CD8-positive, alpha-beta T cell (primary cell): ENCODE measurements at regions of chr15 and their contacts with region 1.

Region 1: DNA sequence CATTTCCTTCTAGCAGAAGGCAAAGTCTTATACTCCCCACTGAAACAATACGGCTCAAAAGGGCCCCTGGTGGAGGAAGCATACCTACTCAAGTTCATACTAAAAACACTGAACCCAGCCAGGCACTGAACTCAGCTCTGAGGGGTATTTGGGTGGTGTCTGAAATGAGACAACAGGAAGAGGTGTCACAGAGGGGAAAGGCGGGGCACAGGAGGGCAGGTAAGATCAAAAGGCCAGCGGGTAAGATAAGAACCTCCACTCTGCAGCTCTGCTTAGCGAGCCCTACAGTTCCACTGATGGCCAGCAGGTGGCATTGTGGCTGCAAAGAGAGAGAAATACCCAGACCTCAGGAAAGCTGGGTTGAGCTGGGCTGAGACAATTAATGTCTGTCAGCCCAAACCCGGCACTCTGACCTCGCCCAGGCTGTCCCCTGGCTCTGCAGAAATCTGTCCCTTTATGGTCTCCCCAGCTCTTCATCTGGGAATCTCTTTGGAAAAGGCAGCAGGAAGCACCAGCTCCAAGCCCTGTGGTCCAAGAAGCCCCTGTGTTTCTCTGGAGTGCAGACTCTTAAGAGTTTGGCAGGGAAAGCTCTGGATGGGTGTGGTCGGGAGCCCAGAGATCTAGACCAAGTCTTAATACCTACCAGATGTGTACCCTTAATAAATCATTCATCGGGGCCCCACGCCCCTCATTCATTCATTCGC is 8.4 kb downstream of the MFGE8 start:
- DNase-seq: peak; percentile 90 to 97 (median 95)
- ATAC-seq: peak; percentile 98
- H3K4me3 ChIP-seq: no peak overlapping the region
- H3K4me3 Mint-ChIP-seq: peak overlapping the region; percentile 61
- H3K27ac ChIP-seq: peak overlapping the region; percentile 36 to 66
- H3K27ac Mint-ChIP-seq: peak overlapping the region; percentile 91
- H3K4me1 ChIP-seq: peaks cover 31% of the 10 kb centered on the region
- H3K4me1 Mint-ChIP-seq: peaks cover 41% of the 10 kb centered on the region
- H3K27me3 ChIP-seq: no peaks in the 10 kb centered on the region
- H3K27me3 Mint-ChIP-seq: no peaks in the 10 kb centered on the region
- CTCF ChIP-seq: peak; percentile 87

Region 2: DNA sequence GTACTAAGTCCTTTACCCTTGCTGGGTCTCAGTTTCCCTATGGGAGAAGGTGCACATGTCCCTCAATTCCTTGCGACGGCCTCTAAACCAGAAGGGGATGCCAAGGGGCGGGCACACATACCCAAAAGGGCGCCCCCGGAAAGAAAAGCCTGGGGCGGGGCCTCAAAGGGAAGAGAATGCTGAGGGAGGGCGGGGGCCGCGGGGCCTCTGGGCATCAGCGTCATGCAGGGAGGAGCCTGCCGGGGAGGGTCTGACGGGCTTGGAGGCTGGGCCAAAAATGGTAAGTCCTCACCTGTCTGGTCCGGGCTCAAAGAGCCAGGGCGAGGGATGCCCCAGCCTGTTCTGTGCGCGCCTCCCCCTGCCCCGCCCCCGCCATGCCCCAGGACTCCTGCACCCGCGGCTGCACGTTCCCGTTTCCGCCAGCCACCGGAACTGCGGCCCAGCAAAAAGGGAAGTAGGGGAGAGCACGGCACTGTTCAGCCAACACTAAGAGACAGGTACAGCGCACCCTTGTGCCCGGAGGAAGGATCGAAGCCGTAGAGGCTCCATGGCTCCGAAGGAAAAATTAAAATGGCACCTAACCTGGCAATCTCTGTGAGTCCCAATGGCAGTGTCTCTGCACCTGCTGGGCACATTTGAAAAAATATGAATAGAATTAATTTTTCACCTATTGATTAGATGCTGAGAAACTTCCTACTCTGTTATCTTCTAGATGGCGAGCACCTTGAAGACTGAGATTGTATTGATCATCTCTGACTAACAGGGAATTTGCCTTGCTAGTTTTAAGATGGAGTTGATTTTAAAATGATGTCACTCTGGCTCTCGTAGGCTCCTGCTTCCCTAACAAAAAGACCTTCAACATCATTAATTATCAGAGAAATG is 358.3 kb before region 1 on chr15 and contains the start of gene DET1:
- CTCF ChIA-PET with region 1: no interaction called
- POLR2A ChIA-PET with region 1: no interaction called
- intact Hi-C with region 1: loop called (anchors 1 to 10 kb)
- DNase-seq: peak; percentile 87 to 98 (median 94)
- ATAC-seq: peak; percentile 91
- H3K4me3 ChIP-seq: peak within 1 kb of the TSS; percentile 60 to 62
- H3K4me3 Mint-ChIP-seq: peak within 1 kb of the TSS; percentile 91
- H3K27ac ChIP-seq: peak within 1 kb of the TSS; percentile 72 to 80
- H3K27ac Mint-ChIP-seq: peak within 1 kb of the TSS; percentile 96
- H3K4me1 ChIP-seq: peaks cover 6% of the 10 kb centered on the region
- H3K4me1 Mint-ChIP-seq: peaks cover 18% of the 10 kb centered on the region
- H3K27me3 ChIP-seq: no peaks in the 10 kb centered on the region
- H3K27me3 Mint-ChIP-seq: no peaks in the 10 kb centered on the region
- CTCF ChIP-seq: peak; percentile 70
- total RNA-seq, gene DET1: 1.4 to 2.0 TPM

Region 3: GRCh38 chr15:89003865-89004725 is 99.3 kb after region 1 on chr15:
- CTCF ChIA-PET with region 1: interaction called, 16 read pairs
- POLR2A ChIA-PET with region 1: interaction called, 6 read pairs
- intact Hi-C with region 1: no loop called
- DNase-seq: peak in 2 of 9 experiments; percentile 11 to 23
- ATAC-seq: no peak
- H3K4me3 ChIP-seq: no peak overlapping the region
- H3K4me3 Mint-ChIP-seq: no peak overlapping the region
- H3K27ac ChIP-seq: no peak overlapping the region
- H3K27ac Mint-ChIP-seq: no peak overlapping the region
- H3K4me1 ChIP-seq: no peaks in the 10 kb centered on the region
- H3K4me1 Mint-ChIP-seq: peaks cover 4% of the 10 kb centered on the region
- H3K27me3 ChIP-seq: no peaks in the 10 kb centered on the region
- H3K27me3 Mint-ChIP-seq: peaks cover 8% of the 10 kb centered on the region
- CTCF ChIP-seq: no peak

Region 4: GRCh38 chr15:89087830-89088604 is 183.2 kb after region 1 on chr15 and contains the start of gene ABHD2:
- CTCF ChIA-PET with region 1: interaction called, 10 read pairs
- POLR2A ChIA-PET with region 1: interaction called, 22 read pairs
- intact Hi-C with region 1: loop called (anchors 2 kb)
- DNase-seq: peak; percentile 94 to 99 (median 98)
- ATAC-seq: peak; percentile 94
- H3K4me3 ChIP-seq: peak within 1 kb of the TSS; percentile 65 to 87
- H3K4me3 Mint-ChIP-seq: no peak within 1 kb of the TSS
- H3K27ac ChIP-seq: peak within 1 kb of the TSS; percentile 50 to 69
- H3K27ac Mint-ChIP-seq: peak within 1 kb of the TSS; percentile 70
- H3K4me1 ChIP-seq: peaks cover 43% of the 10 kb centered on the region
- H3K4me1 Mint-ChIP-seq: peaks cover 35% of the 10 kb centered on the region
- H3K27me3 ChIP-seq: no peaks in the 10 kb centered on the region
- H3K27me3 Mint-ChIP-seq: no peaks in the 10 kb centered on the region
- CTCF ChIP-seq: no peak
- total RNA-seq, gene ABHD2: 22.2 to 25.7 TPM

Region 5: DNA sequence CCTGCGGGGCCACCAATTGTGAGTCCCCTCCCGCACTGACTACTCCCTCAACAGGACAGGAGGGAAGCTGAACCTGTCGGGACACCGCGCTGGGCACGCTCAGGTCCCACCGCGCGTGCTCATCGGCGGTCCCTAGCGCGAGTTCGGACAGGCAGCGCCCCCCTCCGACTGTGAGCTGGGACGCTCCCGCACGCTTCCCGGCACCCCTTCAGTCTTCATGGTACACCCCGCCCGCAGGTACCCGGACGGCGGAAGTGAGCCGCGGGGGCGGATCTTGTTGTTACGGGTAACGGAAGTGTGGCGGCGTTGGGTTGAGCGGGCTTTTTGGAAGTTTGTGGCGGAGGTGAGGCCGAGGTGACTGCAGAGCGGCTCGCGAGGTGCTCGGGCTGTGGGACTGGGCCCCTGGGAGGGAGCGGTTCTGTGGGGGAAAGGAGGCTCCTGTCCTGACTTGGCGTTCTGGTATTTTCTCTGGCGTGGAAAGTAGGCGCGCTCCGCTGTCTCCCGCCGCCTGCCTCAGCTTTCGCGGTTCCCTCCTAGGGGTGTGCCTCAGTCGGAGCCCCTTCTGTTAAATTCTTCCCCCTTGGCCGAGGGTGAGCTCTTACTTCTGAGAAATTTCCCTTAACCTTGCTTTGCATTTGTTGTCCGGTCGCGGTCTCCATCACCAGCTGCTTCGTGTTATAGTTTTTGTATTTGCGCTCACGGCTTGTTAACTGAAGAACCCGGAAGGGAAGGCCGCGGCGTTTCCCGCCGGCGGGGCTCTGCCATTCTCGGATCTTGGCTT is 339.1 kb after region 1 on chr15 and contains the start of gene FANCI:
- CTCF ChIA-PET with region 1: no interaction called
- POLR2A ChIA-PET with region 1: no interaction called
- intact Hi-C with region 1: loop called in 1 of 2 experiments (anchors 2 kb)
- DNase-seq: peak; percentile 93 to 98 (median 97)
- ATAC-seq: peak; percentile 98
- H3K4me3 ChIP-seq: peak within 1 kb of the TSS; percentile 77 to 85
- H3K4me3 Mint-ChIP-seq: peak within 1 kb of the TSS; percentile 95
- H3K27ac ChIP-seq: peak within 1 kb of the TSS; percentile 24 to 52
- H3K27ac Mint-ChIP-seq: peak within 1 kb of the TSS; percentile 90
- H3K4me1 ChIP-seq: peaks cover 15% of the 10 kb centered on the region
- H3K4me1 Mint-ChIP-seq: peaks cover 25% of the 10 kb centered on the region
- H3K27me3 ChIP-seq: no peaks in the 10 kb centered on the region
- H3K27me3 Mint-ChIP-seq: no peaks in the 10 kb centered on the region
- CTCF ChIP-seq: no peak
- total RNA-seq, gene FANCI: 5.1 to 6.3 TPM

Region 6: DNA sequence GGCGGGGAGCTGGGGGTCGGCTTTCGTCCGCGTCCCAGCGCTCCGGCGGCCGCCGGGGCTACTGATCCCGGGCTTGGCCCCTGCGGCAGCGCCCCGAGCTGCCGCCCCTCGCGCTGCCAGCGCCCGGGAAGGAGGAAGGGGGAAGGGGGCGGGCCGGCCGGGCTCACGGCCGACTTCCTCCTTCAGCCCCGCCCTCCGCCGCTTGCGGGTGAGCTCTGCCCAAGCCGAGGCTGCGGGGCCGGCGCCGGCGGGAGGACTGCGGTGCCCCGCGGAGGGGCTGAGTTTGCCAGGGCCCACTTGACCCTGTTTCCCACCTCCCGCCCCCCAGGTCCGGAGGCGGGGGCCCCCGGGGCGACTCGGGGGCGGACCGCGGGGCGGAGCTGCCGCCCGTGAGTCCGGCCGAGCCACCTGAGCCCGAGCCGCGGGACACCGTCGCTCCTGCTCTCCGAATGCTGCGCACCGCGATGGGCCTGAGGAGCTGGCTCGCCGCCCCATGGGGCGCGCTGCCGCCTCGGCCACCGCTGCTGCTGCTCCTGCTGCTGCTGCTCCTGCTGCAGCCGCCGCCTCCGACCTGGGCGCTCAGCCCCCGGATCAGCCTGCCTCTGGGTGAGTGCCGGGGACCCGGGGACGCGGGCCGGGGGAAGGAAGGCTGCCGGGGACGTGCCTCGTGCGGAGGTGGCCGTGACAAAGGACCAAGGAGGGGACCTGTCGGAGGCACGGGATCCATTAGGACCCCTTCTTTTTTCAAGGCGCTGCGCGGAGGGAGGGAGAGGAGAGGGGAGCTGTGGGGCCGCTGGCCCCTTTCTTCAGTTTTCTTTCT is 1296.6 kb after region 1 on chr15 and contains the start of gene SEMA4B:
- CTCF ChIA-PET with region 1: no interaction called
- POLR2A ChIA-PET with region 1: no interaction called
- intact Hi-C with region 1: no loop called
- DNase-seq: peak; percentile 37 to 86 (median 74)
- ATAC-seq: peak; percentile 91
- H3K4me3 ChIP-seq: peak within 1 kb of the TSS; percentile 69 to 79
- H3K4me3 Mint-ChIP-seq: peak within 1 kb of the TSS; percentile 88
- H3K27ac ChIP-seq: peak within 1 kb of the TSS; percentile 56 to 60
- H3K27ac Mint-ChIP-seq: peak within 1 kb of the TSS; percentile 82
- H3K4me1 ChIP-seq: peaks cover 21% of the 10 kb centered on the region
- H3K4me1 Mint-ChIP-seq: peaks cover 22% of the 10 kb centered on the region
- H3K27me3 ChIP-seq: no peaks in the 10 kb centered on the region
- H3K27me3 Mint-ChIP-seq: no peaks in the 10 kb centered on the region
- CTCF ChIP-seq: no peak
- total RNA-seq, gene SEMA4B: 7.5 to 12.3 TPM